ENCODE measurements at regions of chr2 and their contacts with region 1.

Region 1: DNA sequence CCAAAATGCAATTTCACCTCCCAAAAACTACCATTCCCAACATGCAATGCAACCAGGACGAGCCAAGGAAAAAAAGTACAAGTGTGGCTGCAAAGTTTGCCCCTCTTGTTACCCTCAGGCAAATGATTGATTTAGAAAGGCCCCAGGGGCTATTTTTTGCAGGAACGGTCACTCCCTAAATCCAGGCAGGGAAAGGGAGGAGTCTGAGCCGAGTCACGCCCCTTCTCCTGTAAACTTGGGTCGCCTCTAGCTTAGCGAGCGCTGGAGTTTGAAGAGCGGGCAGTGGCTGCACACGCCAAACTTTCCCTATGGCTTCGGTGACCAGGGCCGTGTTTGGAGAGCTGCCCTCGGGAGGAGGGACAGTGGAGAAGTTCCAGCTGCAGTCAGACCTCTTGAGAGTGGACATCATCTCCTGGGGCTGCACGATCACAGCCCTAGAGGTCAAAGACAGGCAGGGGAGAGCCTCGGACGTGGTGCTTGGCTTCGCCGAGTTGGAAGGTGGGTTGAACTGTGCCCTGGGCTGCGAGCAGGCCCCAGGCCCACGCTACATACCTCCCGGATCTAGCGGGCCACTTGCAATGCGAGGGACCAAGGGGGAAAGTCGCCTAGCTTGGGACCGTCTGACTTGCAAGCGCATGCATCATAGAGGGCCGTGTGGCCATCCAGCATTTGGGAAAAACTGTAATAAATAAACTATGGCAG is at the start of gene GALM:
- DNase-seq: peak; percentile 84
- H3K4me3 ChIP-seq: peak within 1 kb of the TSS; percentile 82
- H3K27ac ChIP-seq: peak within 1 kb of the TSS; percentile 50
- H3K27me3 ChIP-seq: no peaks in the 10 kb centered on the region
- CTCF ChIP-seq: no peak
- polyA plus RNA-seq, gene GALM: 15.5 and 19.0 TPM in 2 replicates

Region 2: GRCh38 chr2:38610851-38611801 is 54.9 kb before region 1 on chr2:
- CTCF ChIA-PET with region 1: no interaction called
- POLR2A ChIA-PET with region 1: interaction called, 12 read pairs
- DNase-seq: no peak
- H3K4me3 ChIP-seq: no peak overlapping the region
- H3K27ac ChIP-seq: no peak overlapping the region
- H3K27me3 ChIP-seq: no peaks in the 10 kb centered on the region
- CTCF ChIP-seq: no peak

Region 3: DNA sequence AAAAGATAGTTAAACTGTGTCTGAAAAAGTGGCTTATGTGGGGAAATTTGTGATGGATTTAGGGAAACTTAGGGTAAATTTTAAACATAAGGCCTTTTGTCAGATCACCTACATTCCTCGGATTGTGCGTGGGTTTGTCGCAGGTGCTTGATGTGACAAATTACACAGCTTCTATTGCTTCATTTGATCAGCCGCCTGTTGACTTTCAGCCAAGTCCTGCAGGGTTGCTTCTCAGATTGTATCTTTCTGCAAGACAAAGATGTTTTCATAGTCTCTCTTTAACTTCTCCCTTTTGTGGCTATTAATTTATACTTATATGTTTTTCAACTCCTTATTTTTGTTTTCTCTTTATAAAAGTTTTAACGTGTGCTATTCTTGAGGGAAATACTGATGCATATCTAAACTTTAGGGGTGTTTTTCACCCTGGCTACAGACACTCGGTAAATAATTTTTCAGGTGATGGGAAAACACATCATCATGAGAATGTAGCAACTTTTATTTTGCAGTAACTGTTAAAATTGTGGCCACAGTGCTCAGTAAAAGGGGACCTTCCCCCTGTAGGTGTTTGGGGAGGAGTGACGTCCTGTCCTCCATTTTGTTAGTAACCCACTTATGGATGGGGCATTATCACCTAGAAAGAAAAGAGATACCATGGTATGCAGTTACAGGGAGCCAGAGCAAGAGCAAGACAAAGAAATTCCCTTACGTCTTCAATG is 31.3 kb after region 1 on chr2:
- CTCF ChIA-PET with region 1: no interaction called
- POLR2A ChIA-PET with region 1: no interaction called
- DNase-seq: no peak
- H3K4me3 ChIP-seq: no peak overlapping the region
- H3K27ac ChIP-seq: no peak overlapping the region
- H3K27me3 ChIP-seq: no peaks in the 10 kb centered on the region
- CTCF ChIP-seq: no peak

Region 4: GRCh38 chr2:39008665-39009064 is 342.7 kb after region 1 on chr2:
- CTCF ChIA-PET with region 1: no interaction called
- POLR2A ChIA-PET with region 1: no interaction called
- DNase-seq: no peak
- H3K4me3 ChIP-seq: no peak overlapping the region
- H3K27ac ChIP-seq: no peak overlapping the region
- H3K27me3 ChIP-seq: no peaks in the 10 kb centered on the region
- CTCF ChIP-seq: no peak